AG04450 (cell line): ENCODE measurements at regions of chr9 and their contacts with region 1.

Region 1: DNA sequence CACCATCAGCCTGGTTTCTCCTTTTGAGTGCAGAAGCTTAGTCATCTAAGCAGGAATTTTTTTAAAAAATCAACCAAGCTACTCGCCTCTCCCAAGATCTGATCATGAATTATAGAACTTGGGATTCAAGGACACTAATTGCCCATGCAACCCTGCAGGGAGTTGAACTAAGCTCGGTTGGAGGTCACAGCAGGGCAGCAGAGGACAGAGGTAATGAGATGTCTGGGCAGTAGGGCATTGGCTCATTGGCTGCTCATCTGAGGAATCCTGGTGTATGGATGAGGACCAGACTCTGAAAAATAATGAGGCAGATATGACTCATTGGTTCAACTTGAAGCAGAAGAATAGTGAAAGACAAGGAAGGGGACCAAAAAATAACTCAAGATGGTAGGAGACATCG is 111.8 kb upstream of the TLE1 start:
- DNase-seq: no peak
- H3K4me3 ChIP-seq: no peak overlapping the region
- H3K27ac ChIP-seq: no peak overlapping the region
- H3K27me3 ChIP-seq: no peaks in the 10 kb centered on the region
- CTCF ChIP-seq: no peak

Region 2: GRCh38 chr9:81729135-81729534 is 72.1 kb before region 1 on chr9:
- CTCF ChIA-PET with region 1: no interaction called
- POLR2A ChIA-PET with region 1: no interaction called
- DNase-seq: no peak
- H3K4me3 ChIP-seq: no peak overlapping the region
- H3K27ac ChIP-seq: no peak overlapping the region
- H3K27me3 ChIP-seq: no peaks in the 10 kb centered on the region
- CTCF ChIP-seq: no peak

Region 3: GRCh38 chr9:81826517-81826906 is 25.3 kb after region 1 on chr9:
- CTCF ChIA-PET with region 1: no interaction called
- POLR2A ChIA-PET with region 1: no interaction called
- DNase-seq: no peak
- H3K4me3 ChIP-seq: no peak overlapping the region
- H3K27ac ChIP-seq: no peak overlapping the region
- H3K27me3 ChIP-seq: no peaks in the 10 kb centered on the region
- CTCF ChIP-seq: no peak

Region 4: GRCh38 chr9:81861644-81862043 is 60.5 kb after region 1 on chr9:
- CTCF ChIA-PET with region 1: no interaction called
- POLR2A ChIA-PET with region 1: no interaction called
- DNase-seq: no peak
- H3K4me3 ChIP-seq: no peak overlapping the region
- H3K27ac ChIP-seq: peak overlapping the region; percentile 11
- H3K27me3 ChIP-seq: no peaks in the 10 kb centered on the region
- CTCF ChIP-seq: no peak

Region 5: GRCh38 chr9:82122731-82123130 is 321.5 kb after region 1 on chr9:
- CTCF ChIA-PET with region 1: no interaction called
- POLR2A ChIA-PET with region 1: interaction called, 12 read pairs
- DNase-seq: no peak
- H3K4me3 ChIP-seq: no peak overlapping the region
- H3K27ac ChIP-seq: no peak overlapping the region
- H3K27me3 ChIP-seq: no peaks in the 10 kb centered on the region
- CTCF ChIP-seq: no peak